PC-3 (cell line): ENCODE measurements at regions of chr16 and their contacts with region 1.

Region 1: DNA sequence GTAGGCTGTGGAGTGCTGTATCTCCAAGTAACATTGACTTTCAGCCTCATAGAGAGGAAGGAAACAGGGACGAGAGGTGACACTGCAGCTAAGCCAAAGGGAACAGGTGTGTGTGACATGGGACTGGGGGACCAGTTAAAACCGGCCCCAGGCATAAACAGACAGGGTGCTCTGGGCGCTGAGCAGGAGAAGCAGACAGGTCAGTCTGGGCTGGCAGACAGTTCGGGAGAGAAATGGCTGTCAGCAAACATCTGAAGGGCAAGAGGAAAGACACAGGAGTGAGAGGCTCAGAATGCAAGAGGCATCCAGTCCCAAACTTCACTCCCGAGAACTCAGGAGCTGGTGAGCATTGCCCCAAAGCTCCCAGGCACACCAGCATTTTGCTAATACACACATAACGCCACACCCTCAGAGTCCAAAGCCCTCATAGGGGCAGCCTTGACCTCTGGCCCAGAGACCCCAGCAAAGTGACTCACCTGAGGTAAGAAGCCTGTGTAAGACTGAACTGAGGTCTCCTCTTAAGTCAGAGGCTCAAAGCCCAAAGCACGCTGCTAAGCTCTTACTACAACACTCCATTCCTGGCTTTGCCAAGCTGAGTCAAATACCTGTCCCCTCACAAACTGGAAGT is 16.5 kb downstream of the ST3GAL2 start:
- DNase-seq: no peak
- ATAC-seq: no peak
- H3K4me3 ChIP-seq: no peak overlapping the region
- H3K27ac ChIP-seq: no peak overlapping the region
- H3K4me1 ChIP-seq: no peaks in the 10 kb centered on the region
- H3K27me3 ChIP-seq: no peaks in the 10 kb centered on the region
- CTCF ChIP-seq: no peak

Region 2: GRCh38 chr16:70407811-70408274 is 14.5 kb before region 1 on chr16:
- CTCF ChIA-PET with region 1: no interaction called
- POLR2A ChIA-PET with region 1: interaction called, 10 read pairs
- intact Hi-C with region 1: no loop called
- DNase-seq: no peak
- ATAC-seq: no peak
- H3K4me3 ChIP-seq: no peak overlapping the region
- H3K27ac ChIP-seq: no peak overlapping the region
- H3K4me1 ChIP-seq: peaks cover 12% of the 10 kb centered on the region; the same call in 1 of the 2 replicates
- H3K27me3 ChIP-seq: no peaks in the 10 kb centered on the region
- CTCF ChIP-seq: no peak